Dendritic cell treated with granulocyte-macrophage colony-stimulating factor and Interleukin-4, amounts not matched to agents 40 ng/mL and 50 ng/mL, for 4 days (primary cell): ENCODE measurements at regions of chr4 and their contacts with region 1.

Region 1: DNA sequence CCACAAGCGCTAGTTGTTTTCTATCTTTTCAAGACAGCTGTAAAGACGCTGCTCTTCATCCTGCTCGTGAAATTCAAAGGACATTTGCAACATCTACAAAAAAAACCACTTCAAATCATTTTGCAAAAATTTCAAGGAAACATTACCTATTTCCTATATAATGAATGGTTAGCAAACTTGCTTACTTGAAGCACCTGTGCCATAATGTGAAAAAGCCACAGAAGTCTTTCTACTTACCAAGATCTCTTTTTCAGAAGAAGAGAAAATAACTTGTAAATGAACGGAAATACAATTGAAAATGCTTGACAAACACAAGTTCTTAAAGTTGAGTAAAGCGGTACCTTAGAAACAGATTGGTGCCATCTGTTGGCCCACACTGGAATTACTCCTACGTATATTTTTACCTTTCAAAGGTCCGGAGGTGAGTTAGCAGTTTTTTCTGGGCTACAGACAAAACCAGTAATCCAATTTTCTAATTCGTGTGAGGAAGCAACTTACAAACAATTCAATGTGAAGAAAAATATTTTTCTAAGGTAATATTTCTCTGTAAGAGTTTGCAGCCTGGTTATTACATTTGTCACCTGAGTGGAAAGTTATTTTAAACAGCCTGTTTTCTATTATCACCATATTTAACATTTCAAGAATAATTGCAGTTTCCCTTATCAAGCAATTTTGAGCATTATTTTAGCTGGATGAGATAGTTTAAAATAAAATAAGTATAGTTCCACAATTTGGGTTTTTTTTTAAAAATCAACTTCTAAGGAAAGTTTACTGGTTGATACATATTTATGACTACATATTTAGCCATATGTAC is at the start of gene TLR6:
- H3K4me3 Mint-ChIP-seq: peak within 1 kb of the TSS; percentile 72
- H3K27ac Mint-ChIP-seq: peak within 1 kb of the TSS; percentile 99
- H3K4me1 Mint-ChIP-seq: peaks cover 42% of the 10 kb centered on the region
- H3K27me3 Mint-ChIP-seq: no peaks in the 10 kb centered on the region

Region 2: DNA sequence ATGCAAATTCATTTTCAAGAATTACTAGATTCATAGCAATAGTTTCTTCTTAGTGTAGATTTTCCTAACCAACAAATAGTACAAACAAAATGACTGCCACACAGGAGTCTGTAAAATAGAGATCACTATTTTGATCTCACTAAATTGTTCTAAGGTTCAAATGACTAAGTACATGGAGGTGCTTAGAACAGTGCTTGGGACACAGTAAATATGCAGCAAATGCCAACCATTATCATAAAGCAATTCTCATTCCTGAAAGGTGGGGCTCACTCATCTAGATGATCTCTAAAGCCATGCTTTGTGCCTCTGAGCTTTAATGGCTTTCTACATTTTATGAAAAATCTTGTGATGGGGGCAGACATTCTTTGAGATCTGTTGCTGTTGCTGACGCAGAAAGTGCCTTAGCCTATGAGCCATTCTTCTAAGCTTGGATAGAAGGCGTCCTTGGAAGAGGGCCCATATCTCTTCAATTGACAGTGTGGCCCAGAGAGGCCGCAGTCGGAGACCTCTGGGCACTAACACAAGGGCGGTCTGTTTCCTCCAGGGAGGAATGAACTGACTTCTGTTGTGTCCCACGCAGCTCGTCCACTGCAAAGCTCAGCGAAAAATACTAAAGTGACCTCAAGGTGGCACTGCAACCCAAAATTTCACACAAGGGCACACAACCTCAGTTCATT is 97.5 kb before region 1 on chr4:
- intact Hi-C with region 1: loop called (anchors 1 kb)
- H3K4me3 Mint-ChIP-seq: no peak overlapping the region
- H3K27ac Mint-ChIP-seq: peak overlapping the region; percentile 53
- H3K4me1 Mint-ChIP-seq: peaks cover 42% of the 10 kb centered on the region
- H3K27me3 Mint-ChIP-seq: no peaks in the 10 kb centered on the region

Region 3: DNA sequence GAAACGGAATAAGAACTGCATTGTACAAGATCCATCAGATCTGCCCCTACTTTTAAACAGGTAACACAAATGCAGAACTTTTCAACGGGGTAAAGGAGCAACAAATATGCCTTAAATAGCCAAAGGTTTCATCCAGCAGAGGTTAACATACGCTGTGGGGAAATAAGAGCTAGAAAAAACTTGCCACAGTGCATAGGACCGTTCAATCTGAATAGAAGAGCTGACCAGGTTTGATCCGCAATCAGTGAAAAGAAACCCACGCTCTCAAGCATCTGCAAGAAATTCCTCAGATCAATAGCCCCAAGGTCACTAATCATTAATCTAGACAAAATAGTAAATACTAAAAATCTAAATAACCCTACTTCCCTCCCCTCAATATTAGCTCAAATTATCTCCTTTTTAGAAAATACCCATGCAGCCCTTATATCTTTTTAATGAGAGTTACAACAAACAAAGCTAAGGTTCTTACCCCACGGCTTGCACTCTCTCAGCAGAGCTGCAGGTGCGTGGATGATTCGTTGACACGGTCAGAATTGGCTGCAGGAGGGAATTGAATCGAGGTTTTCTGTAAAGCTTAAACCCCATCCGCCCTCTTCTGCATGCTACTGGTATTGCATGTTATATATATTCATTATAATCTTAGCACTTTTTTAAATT is 74.2 kb before region 1 on chr4 and contains the start of gene TLR10:
- intact Hi-C with region 1: loop called (anchors 1 kb)
- H3K4me3 Mint-ChIP-seq: no peak within 1 kb of the TSS
- H3K27ac Mint-ChIP-seq: no peak within 1 kb of the TSS
- H3K4me1 Mint-ChIP-seq: peaks cover 44% of the 10 kb centered on the region
- H3K27me3 Mint-ChIP-seq: no peaks in the 10 kb centered on the region

Region 4: DNA sequence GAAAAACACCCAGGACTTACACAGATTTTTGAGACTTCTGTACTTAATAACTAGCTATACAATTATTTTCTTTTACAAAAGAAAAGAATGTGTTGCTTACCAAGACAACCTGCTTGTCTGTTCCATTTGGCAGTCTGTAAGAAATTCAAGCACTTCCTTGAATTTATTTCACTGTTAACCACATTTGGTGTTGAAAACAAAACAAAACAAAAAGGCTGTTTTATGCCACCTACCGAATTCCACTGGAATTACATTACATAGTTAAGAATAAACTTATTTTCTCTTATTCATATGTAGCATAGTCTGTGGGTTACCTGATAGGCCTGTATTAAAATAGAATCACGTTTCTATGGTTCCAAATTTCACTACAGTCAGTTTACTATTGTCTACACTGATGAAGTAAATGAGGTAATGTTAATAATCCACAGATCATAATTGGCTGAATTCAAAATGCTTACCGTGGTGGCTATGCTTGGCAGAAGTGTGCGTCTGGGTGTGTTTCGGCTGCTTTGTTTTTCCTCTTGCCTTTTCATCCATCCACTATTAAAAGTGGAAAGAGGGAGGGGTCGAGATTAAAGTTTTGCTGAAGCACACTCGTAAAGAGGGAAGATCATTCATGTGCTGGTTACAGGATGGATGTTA is 52.0 kb before region 1 on chr4 and contains the start of gene TLR1:
- intact Hi-C with region 1: loop called (anchors 1 kb)
- H3K4me3 Mint-ChIP-seq: peak within 1 kb of the TSS; percentile 88
- H3K27ac Mint-ChIP-seq: peak within 1 kb of the TSS; percentile 96
- H3K4me1 Mint-ChIP-seq: peaks cover 66% of the 10 kb centered on the region
- H3K27me3 Mint-ChIP-seq: no peaks in the 10 kb centered on the region

Region 5: DNA sequence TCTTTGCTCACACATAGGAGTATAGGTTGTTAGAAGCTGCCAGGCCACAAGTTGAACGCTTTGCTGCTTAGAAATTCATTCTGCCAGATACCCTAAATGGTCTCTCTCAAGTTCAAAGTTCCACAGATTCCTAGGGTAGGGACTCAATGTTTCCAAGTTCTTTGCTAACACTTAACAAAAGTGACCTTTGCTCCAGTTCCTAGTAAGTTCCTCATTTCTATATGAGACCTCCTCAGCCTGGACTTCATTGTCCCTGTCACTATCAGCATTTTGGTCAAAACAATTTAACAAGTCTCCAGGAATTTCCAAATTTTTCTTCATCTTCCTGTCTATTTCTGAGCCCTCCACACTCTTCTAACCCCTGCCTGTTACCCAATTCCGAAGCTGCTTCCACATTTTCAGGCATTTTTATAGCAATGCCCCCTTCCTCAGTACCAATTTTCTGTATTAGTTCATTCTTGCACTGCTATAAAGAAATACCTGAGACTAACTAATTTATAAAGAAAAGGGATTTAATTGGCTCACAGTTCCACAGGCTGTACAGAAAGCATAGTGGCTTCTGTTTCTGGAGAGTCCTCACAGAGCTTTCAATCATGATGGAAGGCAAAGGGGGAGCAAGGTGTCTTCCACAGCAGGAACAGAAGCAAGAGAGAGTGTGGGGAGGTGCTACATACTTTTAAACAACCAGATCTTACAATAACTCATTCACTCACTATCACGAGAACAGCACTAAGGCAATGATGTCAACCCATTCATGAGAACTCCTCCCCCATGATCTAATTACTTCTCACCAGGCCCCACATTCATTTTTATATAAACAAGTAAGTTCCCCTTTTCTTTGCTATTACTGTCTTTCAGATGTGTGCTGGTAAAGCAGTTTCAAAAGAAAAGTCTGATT is 40.6 kb before region 1 on chr4:
- intact Hi-C with region 1: loop called (anchors 5 kb)
- H3K4me3 Mint-ChIP-seq: peak overlapping the region; percentile 27
- H3K27ac Mint-ChIP-seq: peak overlapping the region; percentile 79
- H3K4me1 Mint-ChIP-seq: peaks cover 68% of the 10 kb centered on the region
- H3K27me3 Mint-ChIP-seq: no peaks in the 10 kb centered on the region